ENCODE measurements at regions of chr3 and their contacts with region 1.

Region 1: GRCh38 chr3:115169808-115170207 is 22.7 kb upstream of the ZBTB20 start:
- DNase-seq: no peak
- H3K4me3 Mint-ChIP-seq: no peak overlapping the region
- H3K27ac Mint-ChIP-seq: no peak overlapping the region
- H3K4me1 Mint-ChIP-seq: peaks cover 11% of the 10 kb centered on the region
- H3K27me3 Mint-ChIP-seq: peaks cover 11% of the 10 kb centered on the region

Region 2: DNA sequence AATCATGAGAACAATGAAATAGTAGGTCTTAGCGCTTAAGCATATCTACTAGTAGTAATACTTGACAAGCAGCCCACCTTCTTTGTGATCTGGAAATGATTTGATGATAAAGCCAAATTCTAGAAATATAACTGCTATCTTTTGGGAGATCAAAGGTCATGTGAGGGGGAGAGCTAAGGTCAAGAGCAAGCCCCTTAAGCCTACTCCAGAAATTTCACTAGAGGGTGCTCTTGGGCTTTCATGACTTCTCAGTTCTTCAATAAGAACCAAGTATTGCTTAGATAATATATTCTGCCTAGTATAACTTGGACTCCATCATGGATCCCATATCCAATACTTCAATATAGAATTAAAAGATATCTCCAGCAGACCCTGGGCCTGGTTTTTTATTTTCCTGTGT is 342.3 kb before region 1 on chr3:
- intact Hi-C with region 1: loop called (anchors 2 kb)
- DNase-seq: no peak
- H3K4me3 Mint-ChIP-seq: no peak overlapping the region
- H3K27ac Mint-ChIP-seq: no peak overlapping the region
- H3K4me1 Mint-ChIP-seq: no peaks in the 10 kb centered on the region
- H3K27me3 Mint-ChIP-seq: no peaks in the 10 kb centered on the region

Region 3: DNA sequence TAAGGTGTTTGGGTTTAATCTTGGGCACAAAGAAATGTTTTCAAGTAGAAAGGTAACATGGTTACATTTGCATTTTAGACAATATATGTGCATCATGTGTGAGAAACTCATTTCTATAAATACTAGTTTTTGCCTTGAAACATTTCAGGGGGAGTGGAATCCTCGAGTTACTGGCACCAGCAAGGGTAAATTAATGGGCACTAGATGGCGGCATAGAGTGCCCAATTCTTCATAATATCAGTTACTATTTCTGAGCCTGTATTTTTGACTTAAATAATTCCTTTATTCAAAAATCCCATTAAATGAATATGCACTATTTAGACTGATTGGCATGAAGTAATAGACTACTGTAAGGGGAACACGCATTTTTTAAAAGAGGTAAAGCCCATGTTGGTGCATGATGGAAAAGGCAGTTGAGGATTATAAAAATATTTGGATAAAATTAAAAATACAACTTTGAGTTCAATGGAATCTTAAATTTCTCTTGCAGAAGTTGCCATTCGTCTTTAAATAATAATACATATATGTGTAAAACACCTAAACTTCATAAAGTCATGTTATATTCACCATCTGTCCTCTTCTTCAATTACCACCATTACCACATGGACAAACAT is 129.0 kb before region 1 on chr3:
- intact Hi-C with region 1: loop called (anchors 2 kb)
- DNase-seq: no peak
- H3K4me3 Mint-ChIP-seq: no peak overlapping the region
- H3K27ac Mint-ChIP-seq: no peak overlapping the region
- H3K4me1 Mint-ChIP-seq: no peaks in the 10 kb centered on the region
- H3K27me3 Mint-ChIP-seq: no peaks in the 10 kb centered on the region

Region 4: DNA sequence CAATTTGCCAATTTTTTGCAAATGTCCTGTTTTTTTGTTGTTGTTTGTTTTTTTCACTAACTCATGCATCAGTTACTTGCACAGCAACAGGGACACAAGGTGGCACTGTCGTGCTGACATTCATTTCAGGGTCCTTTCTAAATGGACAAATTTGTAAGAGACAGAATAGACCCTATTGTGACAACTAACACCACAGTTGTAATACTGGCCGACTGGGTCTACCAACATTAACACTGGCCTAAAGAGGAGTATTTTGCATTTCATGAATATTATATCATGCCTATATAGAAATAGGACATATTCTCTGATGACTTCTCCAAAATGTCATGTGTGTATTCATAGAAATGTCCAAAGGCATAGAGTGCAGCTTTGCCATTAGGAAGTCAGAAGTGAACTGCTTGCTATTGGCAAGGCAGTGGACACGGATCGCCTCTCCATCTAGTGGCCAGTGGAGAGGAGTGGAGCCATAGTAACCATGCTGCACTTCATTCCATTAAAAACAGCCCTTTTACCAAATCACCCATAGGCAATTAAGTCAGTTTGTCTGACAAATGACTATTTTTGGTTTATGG is 77.5 kb before region 1 on chr3:
- intact Hi-C with region 1: loop called (anchors 1 kb)
- DNase-seq: peak; percentile 15
- H3K4me3 Mint-ChIP-seq: no peak overlapping the region
- H3K27ac Mint-ChIP-seq: no peak overlapping the region
- H3K4me1 Mint-ChIP-seq: no peaks in the 10 kb centered on the region
- H3K27me3 Mint-ChIP-seq: no peaks in the 10 kb centered on the region

Region 5: DNA sequence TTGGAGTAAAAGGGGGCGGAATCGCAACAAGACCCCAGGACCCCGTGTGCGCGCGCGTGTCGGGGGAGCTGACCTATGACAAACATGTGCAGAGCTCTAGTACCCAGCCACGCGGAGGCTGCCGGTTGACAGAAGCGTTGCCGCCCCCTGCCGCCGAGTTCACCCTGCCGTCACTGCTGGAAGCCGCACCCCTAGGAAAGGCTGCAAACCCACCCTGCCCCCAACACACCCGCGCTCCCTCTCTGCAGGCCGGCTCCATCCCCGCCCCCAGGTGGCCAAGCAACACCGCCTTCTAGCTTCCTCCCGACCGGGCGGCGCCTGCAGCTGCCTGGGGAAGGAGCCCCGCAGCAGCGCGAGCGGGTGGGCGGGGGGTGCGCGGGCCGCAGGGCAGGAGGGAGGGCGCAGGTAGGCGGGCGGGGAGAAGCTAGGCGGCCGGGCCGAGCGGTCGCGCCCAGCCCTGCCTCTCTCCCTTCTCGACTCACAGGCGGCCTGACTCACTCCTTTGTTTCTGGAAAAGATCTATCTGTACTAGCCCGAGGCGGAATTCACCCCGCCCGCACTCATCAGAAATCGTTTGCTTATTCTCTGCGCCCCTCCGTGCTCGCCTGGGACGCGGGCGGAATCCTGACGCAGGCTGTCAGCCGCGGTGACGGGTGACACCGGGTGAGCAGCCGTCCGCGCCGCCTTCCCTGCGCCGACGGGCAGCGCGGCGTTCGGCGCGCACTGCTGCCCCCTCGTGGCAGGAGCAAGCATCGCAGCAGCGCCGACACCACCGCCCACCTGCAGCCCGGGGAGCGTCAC is 614.3 kb after region 1 on chr3:
- intact Hi-C with region 1: loop called (anchors 5 kb)
- DNase-seq: peak; percentile 85
- H3K4me3 Mint-ChIP-seq: peak overlapping the region; percentile 82
- H3K27ac Mint-ChIP-seq: peak overlapping the region; percentile 96
- H3K4me1 Mint-ChIP-seq: peaks cover 18% of the 10 kb centered on the region
- H3K27me3 Mint-ChIP-seq: peaks cover 15% of the 10 kb centered on the region

Region 6: DNA sequence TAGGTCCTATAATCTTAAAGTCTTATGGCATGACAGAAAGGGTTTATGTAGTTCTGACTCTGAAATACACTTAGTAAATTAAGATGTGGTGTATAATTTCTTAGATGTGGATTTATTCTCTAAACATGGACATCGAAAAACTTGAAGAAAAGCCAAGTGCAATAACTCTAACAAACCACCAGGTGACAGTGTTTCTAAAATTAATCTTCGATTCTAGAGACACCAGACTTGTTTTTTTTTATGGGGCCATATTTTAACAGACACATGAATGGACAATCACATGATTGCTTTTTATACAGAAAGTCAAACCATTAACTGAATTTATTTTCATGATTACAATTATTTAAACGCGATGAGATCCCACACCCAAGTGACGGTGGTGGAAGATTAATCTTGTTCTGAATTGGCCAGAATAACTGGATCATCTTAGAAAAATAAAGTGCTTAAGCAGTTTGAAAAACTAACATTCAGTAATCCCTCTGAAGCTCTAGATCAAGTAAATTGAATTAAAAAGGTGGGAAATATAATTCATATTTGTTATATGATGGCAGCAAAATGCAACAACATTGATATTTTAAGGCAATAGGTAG is 970.4 kb after region 1 on chr3:
- intact Hi-C with region 1: no loop called
- DNase-seq: no peak
- H3K4me3 Mint-ChIP-seq: no peak overlapping the region
- H3K27ac Mint-ChIP-seq: no peak overlapping the region
- H3K4me1 Mint-ChIP-seq: no peaks in the 10 kb centered on the region
- H3K27me3 Mint-ChIP-seq: no peaks in the 10 kb centered on the region